Prostate gland (tissue), 2 donors: ENCODE measurements at regions of chr2 and their contacts with region 1.

Region 1: DNA sequence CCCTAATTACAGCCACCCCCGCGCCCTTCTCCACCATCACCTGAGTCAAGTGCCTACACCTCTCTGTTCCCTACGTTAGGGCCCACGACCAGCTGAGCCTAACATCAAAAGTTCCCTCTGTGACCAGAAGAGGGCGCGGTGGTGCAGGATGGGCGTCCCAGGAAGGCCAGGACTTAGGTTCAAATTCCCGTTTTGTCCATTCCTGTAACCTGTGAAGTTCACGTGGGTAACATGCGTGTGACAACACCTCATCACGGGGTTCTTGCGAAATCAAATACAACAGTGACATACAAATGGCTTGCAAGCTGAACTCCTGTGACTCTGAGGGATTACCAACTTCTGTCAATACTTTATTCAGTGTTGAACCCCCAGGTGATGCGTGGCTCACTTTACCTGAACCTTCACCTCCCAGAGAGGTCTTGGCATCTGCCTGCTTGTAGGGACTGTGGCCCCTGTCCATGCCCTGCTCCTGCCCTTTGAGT is 207.9 kb downstream of the ARL4C start:
- DNase-seq: peak; percentile 74
- H3K4me3 ChIP-seq: no peak overlapping the region
- H3K27ac ChIP-seq: no peak overlapping the region
- H3K4me1 ChIP-seq: no peaks in the 10 kb centered on the region
- H3K27me3 ChIP-seq: no peaks in the 10 kb centered on the region
- CTCF ChIP-seq: peak; percentile 84 to 89 (median 86)
- POLR2A ChIP-seq: no peak

Region 2: GRCh38 chr2:233974530-233975071 is 314.4 kb before region 1 on chr2:
- intact Hi-C with region 1: no loop called
- DNase-seq: no peak
- H3K4me3 ChIP-seq: no peak overlapping the region
- H3K27ac ChIP-seq: no peak overlapping the region
- H3K4me1 ChIP-seq: no peaks in the 10 kb centered on the region
- H3K27me3 ChIP-seq: no peaks in the 10 kb centered on the region
- CTCF ChIP-seq: no peak
- POLR2A ChIP-seq: no peak

Region 3: DNA sequence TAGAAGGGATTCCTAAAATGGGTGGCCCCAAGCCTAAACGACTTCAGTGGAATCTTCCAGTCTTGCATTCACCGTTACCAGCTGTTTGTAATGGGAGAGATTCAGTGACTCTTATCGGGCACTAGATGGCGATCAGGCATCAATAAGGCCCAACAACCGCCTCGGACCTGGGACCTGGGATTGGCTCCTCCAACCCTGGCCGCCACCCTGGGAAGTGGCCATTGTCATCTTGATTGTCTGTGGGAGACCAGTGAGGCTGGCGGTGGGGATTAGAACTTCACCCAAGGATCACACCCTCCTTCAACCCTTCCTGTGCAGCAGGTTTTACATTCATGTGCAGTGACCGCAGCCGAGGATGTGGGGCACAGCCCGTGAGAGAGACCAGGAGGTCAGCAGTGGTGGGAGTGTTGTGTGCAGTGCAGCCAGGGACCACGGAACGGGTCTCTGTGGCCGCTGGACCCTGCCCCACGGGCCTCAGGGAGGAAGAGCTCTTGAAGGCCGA is 153.2 kb before region 1 on chr2:
- intact Hi-C with region 1: loop called (anchors 5 kb)
- DNase-seq: peak; percentile 43
- H3K4me3 ChIP-seq: no peak overlapping the region
- H3K27ac ChIP-seq: no peak overlapping the region
- H3K4me1 ChIP-seq: no peaks in the 10 kb centered on the region
- H3K27me3 ChIP-seq: no peaks in the 10 kb centered on the region
- CTCF ChIP-seq: peak; percentile 30 to 78 (median 65)
- POLR2A ChIP-seq: no peak

Region 4: GRCh38 chr2:234191819-234192407 is 97.1 kb before region 1 on chr2:
- intact Hi-C with region 1: no loop called
- DNase-seq: no peak
- H3K4me3 ChIP-seq: no peak overlapping the region
- H3K27ac ChIP-seq: no peak overlapping the region
- H3K4me1 ChIP-seq: no peaks in the 10 kb centered on the region
- H3K27me3 ChIP-seq: peaks cover 5% of the 10 kb centered on the region
- CTCF ChIP-seq: no peak
- POLR2A ChIP-seq: no peak